ENCODE measurements at regions of chr10 and their contacts with region 1.

Region 1: GRCh38 chr10:123043409-123043925 is 34.7 kb downstream of the ACADSB start:
- DNase-seq: peak; percentile 30
- ATAC-seq: peak; percentile 97
- H3K4me3 ChIP-seq: no peak overlapping the region
- H3K27ac ChIP-seq: no peak overlapping the region
- H3K4me1 ChIP-seq: peaks cover 8% of the 10 kb centered on the region
- H3K27me3 ChIP-seq: no peaks in the 10 kb centered on the region
- CTCF ChIP-seq: peak; percentile 77 to 78 (median 78)
- EP300 ChIP-seq: no peak
- POLR2A ChIP-seq: no peak
- RAD21 ChIP-seq: peak; percentile 90

Region 2: GRCh38 chr10:122756656-122757055 is 286.8 kb before region 1 on chr10:
- CTCF ChIA-PET with region 1: no interaction called
- POLR2A ChIA-PET with region 1: no interaction called
- RAD21 ChIA-PET with region 1: no interaction called
- SMC1A ChIA-PET with region 1: no interaction called
- in situ Hi-C with region 1: no loop called
- intact Hi-C with region 1: no loop called
- DNase-seq: no peak
- ATAC-seq: no peak
- H3K4me3 ChIP-seq: no peak overlapping the region
- H3K27ac ChIP-seq: no peak overlapping the region
- H3K4me1 ChIP-seq: no peaks in the 10 kb centered on the region
- H3K27me3 ChIP-seq: peaks cover 0 to 1% of the 10 kb centered on the region in 2 experiments; a peak in 1 of 4 replicates
- CTCF ChIP-seq: no peak
- EP300 ChIP-seq: no peak
- POLR2A ChIP-seq: no peak
- RAD21 ChIP-seq: no peak

Region 3: GRCh38 chr10:123021517-123021916 is 21.9 kb before region 1 on chr10:
- CTCF ChIA-PET with region 1: interaction called, 38 read pairs
- POLR2A ChIA-PET with region 1: no interaction called
- RAD21 ChIA-PET with region 1: interaction called, 3 read pairs
- SMC1A ChIA-PET with region 1: interaction called, 4 read pairs
- in situ Hi-C with region 1: no loop called
- intact Hi-C with region 1: no loop called
- DNase-seq: no peak
- ATAC-seq: peak; percentile 51; the same call in 1 of the 3 replicates
- H3K4me3 ChIP-seq: no peak overlapping the region
- H3K27ac ChIP-seq: no peak overlapping the region
- H3K4me1 ChIP-seq: no peaks in the 10 kb centered on the region
- H3K27me3 ChIP-seq: no peaks in the 10 kb centered on the region
- CTCF ChIP-seq: peak; percentile 36 to 47 (median 40)
- EP300 ChIP-seq: no peak
- POLR2A ChIP-seq: no peak
- RAD21 ChIP-seq: peak; percentile 37

Region 4: GRCh38 chr10:123132576-123133477 is 89.4 kb after region 1 on chr10:
- CTCF ChIA-PET with region 1: interaction called, 5 read pairs
- POLR2A ChIA-PET with region 1: no interaction called
- RAD21 ChIA-PET with region 1: interaction called, 3 read pairs
- SMC1A ChIA-PET with region 1: interaction called, 4 read pairs
- in situ Hi-C with region 1: no loop called
- intact Hi-C with region 1: loop called (anchors 2 kb)
- DNase-seq: peak; percentile 40
- ATAC-seq: peak; percentile 88
- H3K4me3 ChIP-seq: peak overlapping the region; percentile 86
- H3K27ac ChIP-seq: no peak overlapping the region
- H3K4me1 ChIP-seq: peaks cover 7% of the 10 kb centered on the region
- H3K27me3 ChIP-seq: peaks cover 2 to 15% of the 10 kb centered on the region in 2 experiments; a peak in 2 of 4 replicates
- CTCF ChIP-seq: peak; percentile 90 to 97 (median 94); a peak in 5 of 6 replicates
- EP300 ChIP-seq: no peak
- POLR2A ChIP-seq: no peak
- RAD21 ChIP-seq: peak; percentile 85

Region 5: DNA sequence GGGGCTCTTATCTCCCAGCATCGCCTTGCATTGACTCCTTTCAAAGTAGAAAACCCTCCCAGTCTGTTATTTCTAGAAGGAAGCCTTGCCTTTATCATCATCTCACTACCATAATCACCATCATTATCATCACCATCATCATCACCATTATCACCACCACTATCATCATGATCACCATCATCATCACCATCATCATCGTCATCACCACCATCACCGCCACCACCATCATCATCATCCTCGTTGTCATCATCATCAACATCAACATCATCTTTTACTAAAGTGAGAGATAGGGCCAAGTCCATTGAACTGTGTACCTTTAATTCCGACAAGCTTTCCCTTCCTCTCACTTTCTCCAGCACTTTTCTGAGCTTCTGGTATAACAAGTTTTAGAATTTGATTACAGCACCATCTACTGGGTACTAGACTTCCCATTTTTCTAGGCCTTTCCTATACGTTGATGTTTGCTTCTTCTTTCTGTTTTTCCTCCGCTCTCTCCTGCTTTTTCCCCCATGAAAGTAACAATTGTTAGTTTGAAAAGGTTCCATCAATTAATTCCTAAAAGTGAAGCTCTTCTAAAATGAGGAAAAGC is 337.1 kb after region 1 on chr10:
- CTCF ChIA-PET with region 1: interaction called, 11 read pairs
- POLR2A ChIA-PET with region 1: no interaction called
- RAD21 ChIA-PET with region 1: interaction called, 3 read pairs
- SMC1A ChIA-PET with region 1: interaction called, 8 read pairs
- in situ Hi-C with region 1: no loop called
- intact Hi-C with region 1: loop called (anchors 5 kb)
- DNase-seq: no peak
- ATAC-seq: peak; percentile 50; the same call in 1 of the 3 replicates
- H3K4me3 ChIP-seq: no peak overlapping the region
- H3K27ac ChIP-seq: no peak overlapping the region
- H3K4me1 ChIP-seq: no peaks in the 10 kb centered on the region
- H3K27me3 ChIP-seq: no peaks in the 10 kb centered on the region
- CTCF ChIP-seq: peak; percentile 32 to 48 (median 39); a peak in 5 of 6 replicates
- EP300 ChIP-seq: no peak
- POLR2A ChIP-seq: no peak
- RAD21 ChIP-seq: peak; percentile 69

Region 6: GRCh38 chr10:123552760-123553554 is 509.5 kb after region 1 on chr10:
- CTCF ChIA-PET with region 1: interaction called, 42 read pairs
- POLR2A ChIA-PET with region 1: no interaction called
- RAD21 ChIA-PET with region 1: interaction called, 12 read pairs
- SMC1A ChIA-PET with region 1: interaction called, 10 read pairs
- in situ Hi-C with region 1: loop called (anchors 5 kb)
- intact Hi-C with region 1: no loop called
- DNase-seq: peak; percentile 81
- ATAC-seq: peak; percentile 84
- H3K4me3 ChIP-seq: 0 out of 2 replicates have a peak overlapping the region, but pooled peaks have one; percentile 2
- H3K27ac ChIP-seq: peak overlapping the region; percentile 85
- H3K4me1 ChIP-seq: peaks cover 74% of the 10 kb centered on the region
- H3K27me3 ChIP-seq: no peaks in the 10 kb centered on the region
- CTCF ChIP-seq: no peak
- EP300 ChIP-seq: peak; percentile 42 to 51; a peak in 2 of 4 replicates
- POLR2A ChIP-seq: 0 out of 2 replicates have a peak, but pooled peaks have one; percentile 38
- RAD21 ChIP-seq: no peak

Region 7: DNA sequence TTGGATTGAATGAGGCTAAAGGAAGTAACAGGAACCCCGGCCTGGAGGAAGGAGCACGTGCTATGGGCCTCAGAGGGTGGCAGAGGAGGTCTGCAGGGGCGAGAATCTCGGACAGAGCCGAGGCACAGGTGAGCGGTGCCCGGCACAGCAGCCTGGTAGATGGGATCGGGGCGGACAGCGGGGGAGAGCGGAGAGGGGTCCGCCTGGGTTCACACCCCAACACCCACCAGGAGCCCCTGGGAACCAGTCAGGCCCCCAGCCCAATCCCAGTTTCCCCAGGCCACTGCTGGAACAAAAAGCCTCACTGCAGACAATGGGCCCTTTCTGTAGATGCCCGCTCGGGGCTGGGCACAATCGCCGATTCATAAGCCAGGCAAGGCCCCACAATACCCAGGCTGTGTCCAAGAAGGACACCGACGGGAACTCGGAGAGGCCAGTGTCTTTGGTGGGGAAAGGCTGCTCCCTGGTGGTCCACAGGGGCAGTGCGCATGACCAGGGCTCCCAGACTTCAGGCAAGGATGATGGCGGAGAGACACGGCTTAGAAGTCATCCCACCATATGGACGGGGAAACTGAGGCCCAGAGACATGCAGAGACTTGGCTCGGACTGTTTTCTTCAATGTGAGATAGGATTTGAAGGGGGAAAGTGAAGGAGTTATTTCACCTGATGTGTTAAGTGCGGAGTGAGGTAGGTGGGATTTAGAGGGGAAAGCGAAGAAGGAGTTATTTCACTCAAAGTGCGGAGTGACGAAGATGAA is 515.8 kb after region 1 on chr10:
- CTCF ChIA-PET with region 1: interaction called, 42 read pairs
- POLR2A ChIA-PET with region 1: no interaction called
- RAD21 ChIA-PET with region 1: interaction called, 12 read pairs
- SMC1A ChIA-PET with region 1: interaction called, 10 read pairs
- in situ Hi-C with region 1: loop called (anchors 5 kb)
- intact Hi-C with region 1: loop called (anchors 1 kb)
- DNase-seq: no peak
- ATAC-seq: peak; percentile 91
- H3K4me3 ChIP-seq: no peak overlapping the region
- H3K27ac ChIP-seq: peak overlapping the region; percentile 18; the same call in 1 of the 2 replicates
- H3K4me1 ChIP-seq: peaks cover 45% of the 10 kb centered on the region
- H3K27me3 ChIP-seq: no peaks in the 10 kb centered on the region; a peak in 1 of 4 replicates
- CTCF ChIP-seq: peak; percentile 84 to 98 (median 98)
- EP300 ChIP-seq: no peak
- POLR2A ChIP-seq: no peak
- RAD21 ChIP-seq: peak; percentile 100

Region 8: GRCh38 chr10:123967396-123968243 is 924.2 kb after region 1 on chr10:
- CTCF ChIA-PET with region 1: no interaction called
- POLR2A ChIA-PET with region 1: no interaction called
- RAD21 ChIA-PET with region 1: no interaction called
- SMC1A ChIA-PET with region 1: interaction called, 3 read pairs
- in situ Hi-C with region 1: no loop called
- intact Hi-C with region 1: loop called (anchors 5 kb)
- DNase-seq: no peak
- ATAC-seq: peak; percentile 96
- H3K4me3 ChIP-seq: no peak overlapping the region
- H3K27ac ChIP-seq: no peak overlapping the region
- H3K4me1 ChIP-seq: no peaks in the 10 kb centered on the region
- H3K27me3 ChIP-seq: no peaks in the 10 kb centered on the region; a peak in 1 of 4 replicates
- CTCF ChIP-seq: peak; percentile 90 to 93 (median 91)
- EP300 ChIP-seq: no peak
- POLR2A ChIP-seq: no peak
- RAD21 ChIP-seq: peak; percentile 96

Measured in GM12878 (cell line).